Activated CD4-positive, alpha-beta memory T cell treated with anti-CD3 and anti-CD28 coated beads for 36 hours (primary cell): ENCODE measurements at regions of chr7 and their contacts with region 1.

Region 1: GRCh38 chr7:140375892-140376730 is 22.2 kb downstream of the SLC37A3 start:
- DNase-seq: peak; percentile 61
- H3K4me3 Mint-ChIP-seq: peak overlapping the region; percentile 62
- H3K27ac Mint-ChIP-seq: peak overlapping the region; percentile 99
- H3K4me1 Mint-ChIP-seq: peaks cover 51% of the 10 kb centered on the region
- H3K27me3 Mint-ChIP-seq: no peaks in the 10 kb centered on the region

Region 2: DNA sequence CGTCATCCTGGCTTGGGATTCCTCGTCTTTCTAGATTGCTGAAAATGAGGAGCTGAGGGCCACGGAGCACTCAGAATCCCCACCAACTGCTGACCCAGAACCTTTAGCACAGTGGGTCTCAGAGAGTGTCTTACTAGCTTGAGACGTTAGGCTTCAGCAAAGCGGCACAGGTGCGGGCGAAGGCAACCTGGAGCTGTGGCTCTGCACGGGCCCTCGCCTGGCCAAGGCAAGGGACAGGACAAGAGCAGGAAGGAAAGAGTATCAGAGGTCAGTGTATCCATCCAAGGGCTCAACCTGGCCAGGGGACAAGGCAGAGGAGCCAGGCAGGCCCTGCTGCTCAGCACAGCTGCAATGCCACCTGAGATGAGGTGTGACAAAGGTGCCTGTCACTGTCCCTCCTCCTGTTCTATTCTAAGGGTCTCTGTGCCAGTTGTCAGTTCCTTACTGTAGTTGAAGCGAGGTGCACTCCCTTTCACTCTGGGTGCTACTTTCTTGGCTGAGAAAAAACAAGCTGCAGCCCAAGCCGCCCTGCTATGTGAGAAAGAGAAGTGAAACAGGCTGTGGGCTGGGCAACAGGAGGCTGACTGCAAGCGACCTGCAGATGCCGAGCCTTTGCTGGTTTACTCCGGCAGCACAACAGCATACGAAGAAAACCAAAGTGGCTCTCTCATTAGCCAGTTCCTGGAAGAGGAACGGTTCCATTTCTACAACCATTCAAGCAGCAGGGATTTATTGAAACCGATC is 166.1 kb before region 1 on chr7:
- CTCF ChIA-PET with region 1: no interaction called
- POLR2A ChIA-PET with region 1: interaction called, 5 read pairs
- intact Hi-C with region 1: loop called (anchors 1 kb)
- DNase-seq: peak; percentile 87
- H3K4me3 Mint-ChIP-seq: peak overlapping the region; percentile 38
- H3K27ac Mint-ChIP-seq: peak overlapping the region; percentile 86
- H3K4me1 Mint-ChIP-seq: peaks cover 86% of the 10 kb centered on the region
- H3K27me3 Mint-ChIP-seq: no peaks in the 10 kb centered on the region

Region 3: DNA sequence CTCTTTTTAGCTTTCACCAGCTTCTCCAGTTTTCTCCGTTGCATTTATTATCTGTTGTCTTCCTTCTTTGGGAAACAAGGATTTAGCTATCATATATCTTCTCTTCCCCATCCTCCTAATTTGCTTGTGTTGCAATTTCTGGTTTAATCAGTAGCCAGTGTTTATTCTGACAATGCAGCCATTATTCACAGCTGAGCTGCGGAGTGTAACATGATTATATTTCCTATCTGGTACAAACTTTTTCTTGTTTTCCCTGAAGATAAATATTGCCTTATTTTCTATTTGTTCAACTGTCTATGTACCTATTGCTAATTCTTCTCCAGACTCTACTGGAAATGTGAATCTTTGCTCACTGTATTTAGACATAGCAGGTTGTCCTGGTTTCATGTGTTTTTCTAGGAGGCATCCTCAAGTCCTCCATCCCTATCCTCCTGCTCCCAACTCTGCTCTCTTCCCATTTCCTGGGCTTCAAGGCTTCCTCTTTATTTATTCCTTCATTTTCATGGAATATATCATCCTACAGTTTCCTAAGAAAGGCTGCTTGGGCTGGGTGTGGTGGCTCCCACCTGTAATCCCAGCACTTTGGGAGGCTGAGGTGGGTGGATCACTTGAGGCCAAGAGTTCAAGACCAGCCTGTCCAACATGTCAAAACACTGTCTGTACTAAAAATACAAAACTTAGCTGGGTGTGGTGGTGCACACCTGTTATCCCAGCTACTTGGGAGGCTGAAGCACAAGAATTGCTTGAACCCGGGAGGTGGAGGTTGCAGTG is 126.9 kb before region 1 on chr7:
- CTCF ChIA-PET with region 1: no interaction called
- POLR2A ChIA-PET with region 1: interaction called, 4 read pairs
- intact Hi-C with region 1: loop called (anchors 1 kb)
- DNase-seq: no peak
- H3K4me3 Mint-ChIP-seq: no peak overlapping the region
- H3K27ac Mint-ChIP-seq: no peak overlapping the region
- H3K4me1 Mint-ChIP-seq: peaks cover 26% of the 10 kb centered on the region
- H3K27me3 Mint-ChIP-seq: no peaks in the 10 kb centered on the region

Region 4: DNA sequence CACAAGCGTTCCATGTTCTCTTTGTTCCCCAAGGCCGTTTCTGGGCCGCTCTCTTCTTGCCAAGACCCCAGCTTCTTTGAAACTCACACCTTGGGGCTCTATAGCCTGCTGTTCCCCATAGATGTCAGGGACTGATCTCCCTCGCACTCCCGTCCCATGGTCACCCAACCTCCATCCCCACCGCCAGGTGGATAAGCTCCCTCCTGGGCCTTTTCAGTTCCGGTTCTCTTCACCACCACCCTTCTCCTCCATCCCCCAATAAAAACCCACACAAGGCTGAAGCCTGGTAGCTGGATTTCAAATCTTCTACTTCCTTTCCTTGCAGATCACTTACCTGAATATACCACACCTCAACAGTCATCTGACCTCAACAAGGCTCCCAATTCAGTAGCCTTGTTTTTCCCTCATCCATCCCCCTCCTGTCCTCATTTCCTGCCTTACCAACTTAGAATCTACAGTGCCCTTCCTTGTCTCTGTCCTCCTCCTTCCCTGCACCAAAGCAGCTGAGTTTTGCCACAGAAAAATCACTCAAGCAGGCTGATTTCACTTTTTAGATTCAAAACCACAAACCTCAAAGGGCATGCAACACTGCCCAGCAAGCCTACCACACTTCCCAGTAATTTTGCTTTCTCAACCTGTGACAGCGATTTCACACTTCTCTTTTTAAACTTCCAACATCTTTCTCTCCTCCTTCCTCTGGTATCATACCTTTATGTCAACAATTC is 14.5 kb after region 1 on chr7:
- CTCF ChIA-PET with region 1: interaction called, 6 read pairs
- POLR2A ChIA-PET with region 1: interaction called, 44 read pairs
- intact Hi-C with region 1: loop called (anchors 1 kb)
- DNase-seq: peak; percentile 65
- H3K4me3 Mint-ChIP-seq: no peak overlapping the region
- H3K27ac Mint-ChIP-seq: no peak overlapping the region
- H3K4me1 Mint-ChIP-seq: peaks cover 10% of the 10 kb centered on the region
- H3K27me3 Mint-ChIP-seq: no peaks in the 10 kb centered on the region

Region 5: GRCh38 chr7:140403878-140404564 is 27.9 kb after region 1 on chr7 and contains the start of gene RAB19:
- CTCF ChIA-PET with region 1: no interaction called
- POLR2A ChIA-PET with region 1: interaction called, 4 read pairs
- intact Hi-C with region 1: loop called (anchors 1 kb)
- DNase-seq: peak; percentile 61
- H3K4me3 Mint-ChIP-seq: peak within 1 kb of the TSS; percentile 87
- H3K27ac Mint-ChIP-seq: peak within 1 kb of the TSS; percentile 92
- H3K4me1 Mint-ChIP-seq: peaks cover 33% of the 10 kb centered on the region
- H3K27me3 Mint-ChIP-seq: no peaks in the 10 kb centered on the region
- total RNA-seq, gene RAB19: 13.3 to 14.5 TPM

Region 6: DNA sequence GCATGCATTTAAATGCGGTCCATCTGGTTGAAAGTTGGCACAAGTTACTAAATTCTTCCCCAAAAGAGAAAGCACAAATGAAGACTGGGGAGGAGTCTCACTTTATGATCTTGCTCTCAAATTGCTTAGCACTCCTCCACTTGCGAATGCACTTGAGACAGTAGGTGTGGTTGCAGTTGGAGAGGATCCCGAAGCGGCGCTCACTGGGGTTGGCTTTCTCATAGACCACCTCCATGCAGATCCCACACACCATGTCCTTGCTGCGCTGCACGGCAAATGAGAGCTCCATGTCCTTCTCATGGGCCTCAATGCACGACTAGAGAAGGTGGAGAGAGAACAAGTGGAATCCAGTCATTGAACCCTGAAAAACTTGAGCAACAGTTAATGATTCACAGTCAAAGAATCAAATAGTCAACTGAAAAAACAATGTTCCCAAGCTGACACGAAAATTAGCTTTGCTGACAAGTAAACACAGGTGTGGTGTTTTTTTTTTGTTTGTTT is 80.5 kb after region 1 on chr7:
- CTCF ChIA-PET with region 1: no interaction called
- POLR2A ChIA-PET with region 1: interaction called, 10 read pairs
- intact Hi-C with region 1: loop called (anchors 1 kb)
- DNase-seq: no peak
- H3K4me3 Mint-ChIP-seq: no peak overlapping the region
- H3K27ac Mint-ChIP-seq: peak overlapping the region; percentile 40
- H3K4me1 Mint-ChIP-seq: peaks cover 51% of the 10 kb centered on the region
- H3K27me3 Mint-ChIP-seq: no peaks in the 10 kb centered on the region